ENCODE measurements at regions of chr14 and their contacts with region 1.

Region 1: DNA sequence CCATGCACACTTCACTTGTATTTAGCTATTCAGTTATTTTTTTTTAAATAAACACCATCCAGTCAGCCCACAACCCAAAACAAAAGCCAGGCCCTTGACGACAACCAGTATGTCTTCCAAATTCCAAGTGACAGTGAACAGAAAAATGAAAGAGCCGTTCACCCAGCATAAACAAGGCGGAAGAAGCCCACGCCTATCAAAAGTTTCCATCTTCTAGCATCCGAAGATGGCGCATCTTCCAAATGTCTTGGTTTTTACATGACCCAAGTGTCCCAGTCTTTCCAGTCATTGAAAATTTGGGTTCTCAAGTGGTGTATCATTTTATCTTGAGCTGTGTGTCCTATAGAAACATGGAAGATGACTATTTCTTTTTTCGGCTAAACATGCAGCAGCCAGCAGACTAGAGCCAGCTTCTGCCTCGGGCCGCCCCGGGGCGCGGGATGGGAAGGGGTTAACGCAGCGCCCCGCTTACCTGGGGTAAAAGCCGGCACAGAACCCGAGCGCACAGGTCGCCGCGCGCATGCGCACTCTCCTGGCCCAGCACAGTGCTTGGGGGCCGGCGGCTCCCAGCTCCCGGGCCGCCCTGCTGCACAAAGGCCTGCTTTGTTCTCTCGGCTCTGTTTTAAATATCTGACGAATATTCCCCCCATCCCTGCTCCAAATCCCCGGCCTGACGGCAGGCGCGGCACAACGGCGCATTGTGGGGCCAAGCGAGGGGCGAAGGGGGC is 164.8 kb downstream of the ZFP36L1 start:
- DNase-seq: peak; percentile 84 to 89
- H3K4me3 ChIP-seq: peak overlapping the region; percentile 49
- H3K4me3 Mint-ChIP-seq: peak overlapping the region; percentile 77
- H3K27ac Mint-ChIP-seq: peak overlapping the region; percentile 89
- H3K4me1 ChIP-seq: peaks cover 26% of the 10 kb centered on the region
- H3K4me1 Mint-ChIP-seq: peaks cover 15% of the 10 kb centered on the region
- H3K27me3 ChIP-seq: no peaks in the 10 kb centered on the region
- H3K27me3 Mint-ChIP-seq: no peaks in the 10 kb centered on the region
- CTCF ChIP-seq: no peak

Region 2: DNA sequence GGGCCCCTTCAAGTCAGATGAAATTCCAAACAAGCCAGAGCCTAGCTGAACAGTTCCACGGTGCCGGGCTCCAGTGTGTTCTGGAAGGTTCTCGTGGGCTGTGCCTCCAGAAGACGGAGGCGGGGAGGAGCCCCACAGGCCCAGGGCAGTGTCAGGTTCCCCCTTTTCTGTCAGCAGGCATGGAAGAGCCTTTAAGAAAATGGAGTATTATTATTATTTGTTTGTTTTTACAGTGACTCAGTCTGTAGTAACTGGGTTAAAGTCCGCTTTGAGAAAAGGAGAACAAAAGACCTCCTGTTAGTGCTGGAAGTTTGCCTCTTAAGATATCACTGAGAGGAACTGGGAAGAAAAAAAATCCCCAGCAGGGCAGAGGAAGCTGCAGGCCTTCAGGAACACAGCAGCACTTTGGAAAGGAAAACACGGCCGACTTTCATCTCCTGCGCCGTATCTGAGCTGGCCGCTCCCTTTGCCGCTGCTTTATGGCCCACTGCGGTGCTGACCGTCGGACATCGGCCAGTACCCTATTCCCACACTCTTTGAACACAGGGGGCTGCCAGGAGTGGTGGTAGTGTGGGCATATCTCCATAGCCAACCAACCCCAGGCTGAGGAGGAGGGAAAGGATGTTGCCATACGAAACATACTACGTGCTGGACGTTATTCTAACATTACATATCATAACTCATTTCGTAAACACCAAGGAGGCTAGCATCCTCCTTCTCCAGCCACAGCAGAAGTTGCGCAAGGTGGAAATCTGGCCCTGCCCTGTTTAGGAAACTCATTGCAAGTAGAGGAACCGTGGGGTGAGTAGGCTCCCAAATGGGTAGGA is 29.2 kb before region 1 on chr14:
- CTCF ChIA-PET with region 1: interaction called, 4 read pairs
- POLR2A ChIA-PET with region 1: interaction called, 3 read pairs
- intact Hi-C with region 1: loop called (anchors 2 kb)
- DNase-seq: peak; percentile 77 to 84
- H3K4me3 ChIP-seq: no peak overlapping the region
- H3K4me3 Mint-ChIP-seq: peak overlapping the region; percentile 59
- H3K27ac Mint-ChIP-seq: peak overlapping the region; percentile 94
- H3K4me1 ChIP-seq: peaks cover 49% of the 10 kb centered on the region
- H3K4me1 Mint-ChIP-seq: peaks cover 33% of the 10 kb centered on the region
- H3K27me3 ChIP-seq: no peaks in the 10 kb centered on the region
- H3K27me3 Mint-ChIP-seq: no peaks in the 10 kb centered on the region
- CTCF ChIP-seq: no peak

Region 3: DNA sequence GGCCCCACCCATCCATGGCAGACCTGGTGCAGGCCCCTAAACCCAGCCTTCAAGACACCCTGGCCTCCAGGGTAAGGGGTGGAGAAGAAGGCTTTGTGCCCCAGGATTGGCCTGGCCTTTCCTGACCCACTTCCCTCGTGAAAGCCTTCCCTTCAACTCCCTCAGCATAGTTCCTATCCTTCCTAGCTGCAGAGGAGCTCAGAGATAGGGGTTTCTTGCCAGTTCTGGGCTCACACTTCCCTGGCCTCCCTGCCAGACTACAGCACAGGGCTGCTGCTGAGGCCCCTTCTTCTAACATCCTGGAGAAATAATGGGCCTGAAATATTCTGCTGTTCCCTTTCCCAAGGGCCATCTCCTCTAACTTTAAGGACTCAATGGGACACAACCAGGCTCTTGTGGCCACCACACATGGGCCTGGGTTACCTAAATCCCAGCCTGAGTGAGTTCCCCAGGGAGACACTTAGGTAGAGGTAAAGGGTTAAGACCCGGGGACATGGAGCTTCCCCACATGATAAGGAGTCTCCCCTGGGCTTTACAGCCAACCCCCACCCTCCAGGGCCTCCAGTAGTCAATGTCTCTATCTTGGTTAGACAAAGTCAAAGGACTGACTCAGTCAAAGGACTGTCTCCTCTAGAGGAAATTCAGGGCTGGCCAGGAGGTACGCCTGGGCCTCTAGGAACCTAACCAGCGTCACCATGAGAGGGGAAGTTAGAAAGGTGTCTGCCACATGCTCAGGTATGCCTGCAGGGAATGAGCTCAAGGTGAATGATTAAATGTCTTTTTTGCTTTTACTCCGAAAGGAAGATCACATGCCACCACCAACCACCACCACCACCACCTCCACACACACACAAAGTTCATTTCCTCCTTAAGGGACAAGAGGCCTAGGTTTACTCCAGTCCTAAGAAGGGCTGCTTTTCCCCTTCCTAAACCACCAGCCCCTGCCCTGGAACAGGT is 157.8 kb after region 1 on chr14:
- CTCF ChIA-PET with region 1: no interaction called
- POLR2A ChIA-PET with region 1: no interaction called
- intact Hi-C with region 1: loop called (anchors 2 kb)
- DNase-seq: peak; percentile 37 to 53
- H3K4me3 ChIP-seq: no peak overlapping the region
- H3K4me3 Mint-ChIP-seq: no peak overlapping the region
- H3K27ac Mint-ChIP-seq: peak overlapping the region; percentile 83
- H3K4me1 ChIP-seq: peaks cover 91% of the 10 kb centered on the region
- H3K4me1 Mint-ChIP-seq: peaks cover 51% of the 10 kb centered on the region
- H3K27me3 ChIP-seq: no peaks in the 10 kb centered on the region
- H3K27me3 Mint-ChIP-seq: no peaks in the 10 kb centered on the region
- CTCF ChIP-seq: no peak

Measured in Caco-2 (cell line).